ENCODE measurements at regions of chr6 and their contacts with region 1.

Region 1: DNA sequence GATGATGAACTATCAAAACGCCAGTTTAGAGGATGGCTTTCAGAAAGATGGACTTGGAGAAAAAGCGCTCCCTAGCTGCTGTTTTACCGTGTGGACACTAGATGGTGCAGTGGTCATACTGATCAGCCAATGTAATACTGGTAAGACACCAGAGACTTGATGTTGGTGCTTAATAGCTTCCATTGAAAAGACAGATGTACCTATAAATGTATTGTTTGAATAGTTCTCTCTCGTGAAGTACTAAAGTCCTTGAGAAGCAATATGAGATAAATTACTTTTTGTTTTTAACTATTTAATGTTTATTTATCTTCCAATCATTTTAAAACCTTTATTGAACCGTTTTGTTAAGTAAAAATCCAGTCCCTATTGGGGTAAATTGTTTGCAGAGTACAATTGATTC is 63.9 kb upstream of the FUCA2 start:
- DNase-seq: no peak
- ATAC-seq: peak; percentile 99
- H3K4me3 Mint-ChIP-seq: no peak overlapping the region
- H3K27ac Mint-ChIP-seq: no peak overlapping the region
- H3K4me1 Mint-ChIP-seq: no peaks in the 10 kb centered on the region
- H3K27me3 Mint-ChIP-seq: no peaks in the 10 kb centered on the region
- CTCF ChIP-seq: peak; percentile 26

Region 2: DNA sequence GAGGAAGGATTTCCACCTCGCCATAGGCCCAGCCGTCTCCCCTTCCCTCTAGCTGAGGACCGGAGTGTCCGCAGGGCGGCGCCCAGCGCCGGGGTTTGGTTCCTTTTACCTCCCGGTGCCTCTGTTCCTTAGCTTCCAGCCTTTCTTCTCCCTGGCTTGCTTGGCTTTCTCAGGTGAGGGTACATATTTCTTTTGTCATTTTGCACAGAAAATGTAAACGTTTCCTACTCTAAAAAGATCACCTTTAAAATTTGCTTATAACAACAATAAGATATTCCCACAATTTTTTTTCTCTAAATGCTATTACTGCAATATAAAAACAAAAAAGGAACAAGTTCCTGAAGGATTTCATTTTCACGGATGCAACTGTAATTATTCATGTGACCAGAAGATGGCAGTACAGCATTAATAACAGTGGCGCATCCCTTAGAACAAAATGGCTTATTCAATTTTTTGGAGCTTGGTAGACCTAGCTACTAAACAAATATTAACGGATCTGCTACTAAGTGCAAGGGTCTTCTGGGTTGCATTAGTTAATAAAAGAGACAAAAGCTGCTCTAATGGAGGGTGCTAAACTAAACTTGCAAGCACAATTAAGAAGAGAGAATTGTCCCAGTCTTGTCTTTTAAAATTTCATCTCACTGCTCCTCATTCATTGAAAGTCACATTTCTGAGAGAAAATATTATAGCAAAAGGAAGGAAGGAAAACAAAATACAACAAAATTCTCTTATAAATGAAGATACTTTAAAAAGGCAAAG is 1100.7 kb before region 1 on chr6:
- CTCF ChIA-PET with region 1: interaction called, 4 read pairs
- POLR2A ChIA-PET with region 1: no interaction called
- intact Hi-C with region 1: loop called (anchors 1 kb)
- DNase-seq: no peak
- ATAC-seq: peak; percentile 54
- H3K4me3 Mint-ChIP-seq: no peak overlapping the region
- H3K27ac Mint-ChIP-seq: no peak overlapping the region
- H3K4me1 Mint-ChIP-seq: no peaks in the 10 kb centered on the region
- H3K27me3 Mint-ChIP-seq: peaks cover 3% of the 10 kb centered on the region
- CTCF ChIP-seq: peak; percentile 81

Region 3: DNA sequence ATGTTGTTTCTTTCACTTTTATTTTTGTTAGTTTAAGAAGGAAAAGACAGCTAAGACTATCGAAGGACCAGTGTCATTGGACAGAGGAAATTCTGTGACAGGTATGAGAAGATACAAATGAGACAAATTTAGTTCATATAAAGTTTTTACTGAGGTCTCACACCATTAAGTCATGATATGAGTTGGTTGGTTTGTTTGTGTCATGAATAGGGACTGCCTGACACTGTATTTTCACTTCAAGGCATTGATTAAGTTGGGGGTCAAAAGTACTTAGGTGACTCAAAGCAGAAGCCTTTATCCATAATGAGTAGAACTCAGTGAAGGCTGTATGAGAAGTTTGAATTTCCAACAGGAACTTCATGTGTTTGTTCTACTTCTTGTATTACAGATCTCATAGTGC is 609.1 kb before region 1 on chr6:
- CTCF ChIA-PET with region 1: no interaction called
- POLR2A ChIA-PET with region 1: no interaction called
- intact Hi-C with region 1: no loop called
- DNase-seq: no peak
- ATAC-seq: no peak
- H3K4me3 Mint-ChIP-seq: no peak overlapping the region
- H3K27ac Mint-ChIP-seq: no peak overlapping the region
- H3K4me1 Mint-ChIP-seq: no peaks in the 10 kb centered on the region
- H3K27me3 Mint-ChIP-seq: no peaks in the 10 kb centered on the region
- CTCF ChIP-seq: no peak

Region 4: DNA sequence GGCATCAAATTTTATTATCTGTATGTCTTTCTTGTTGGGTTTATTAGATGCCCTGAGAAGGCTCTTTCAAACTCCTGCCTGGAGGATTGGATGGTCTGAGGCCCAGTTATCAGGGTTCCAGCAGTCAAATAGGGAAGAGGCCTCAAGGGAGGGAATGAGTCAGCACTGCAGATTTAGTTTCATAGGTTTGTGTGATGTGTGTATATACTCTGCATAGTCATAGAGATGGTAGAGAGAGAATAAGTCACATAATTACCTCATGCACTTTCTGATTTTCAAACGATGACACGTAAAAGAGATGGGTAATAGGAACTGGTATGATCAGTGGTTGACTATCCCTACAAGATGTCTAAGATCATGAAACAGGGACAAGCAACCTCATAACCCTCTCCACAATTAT is 207.0 kb before region 1 on chr6:
- CTCF ChIA-PET with region 1: no interaction called
- POLR2A ChIA-PET with region 1: no interaction called
- intact Hi-C with region 1: no loop called
- DNase-seq: no peak
- ATAC-seq: no peak
- H3K4me3 Mint-ChIP-seq: no peak overlapping the region
- H3K27ac Mint-ChIP-seq: no peak overlapping the region
- H3K4me1 Mint-ChIP-seq: no peaks in the 10 kb centered on the region
- H3K27me3 Mint-ChIP-seq: no peaks in the 10 kb centered on the region
- CTCF ChIP-seq: no peak

Region 5: GRCh38 chr6:144013486-144013909 is 438.1 kb after region 1 on chr6:
- CTCF ChIA-PET with region 1: interaction called, 100 read pairs
- POLR2A ChIA-PET with region 1: no interaction called
- intact Hi-C with region 1: loop called (anchors 1 kb)
- DNase-seq: peak; percentile 28
- ATAC-seq: peak; percentile 31
- H3K4me3 Mint-ChIP-seq: no peak overlapping the region
- H3K27ac Mint-ChIP-seq: no peak overlapping the region
- H3K4me1 Mint-ChIP-seq: peaks cover 2% of the 10 kb centered on the region
- H3K27me3 Mint-ChIP-seq: no peaks in the 10 kb centered on the region
- CTCF ChIP-seq: peak; percentile 90

Region 6: GRCh38 chr6:144931172-144932035 is 1356.0 kb after region 1 on chr6:
- CTCF ChIA-PET with region 1: no interaction called
- POLR2A ChIA-PET with region 1: no interaction called
- intact Hi-C with region 1: loop called (anchors 5 kb)
- DNase-seq: no peak
- ATAC-seq: no peak
- H3K4me3 Mint-ChIP-seq: no peak overlapping the region
- H3K27ac Mint-ChIP-seq: no peak overlapping the region
- H3K4me1 Mint-ChIP-seq: no peaks in the 10 kb centered on the region
- H3K27me3 Mint-ChIP-seq: peaks cover 5% of the 10 kb centered on the region
- CTCF ChIP-seq: no peak

Region 7: DNA sequence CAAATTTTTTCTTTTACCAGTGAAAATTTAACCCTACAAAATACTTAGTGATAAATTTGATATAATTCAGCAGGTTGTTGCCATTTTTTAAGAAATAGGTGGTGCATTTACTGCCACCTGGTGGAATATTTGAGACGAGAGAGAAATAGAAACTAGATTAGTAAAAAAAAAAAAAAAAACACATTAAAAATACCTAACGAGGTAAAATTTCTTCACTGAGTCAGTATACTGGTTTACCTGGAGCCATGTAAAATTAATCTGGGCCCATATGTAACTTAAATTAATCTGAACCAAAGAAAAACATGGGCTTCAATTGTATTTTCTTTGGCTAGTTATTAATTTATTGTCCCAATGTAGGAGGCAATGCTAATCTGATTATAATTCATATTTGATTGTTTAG is 1639.1 kb after region 1 on chr6:
- CTCF ChIA-PET with region 1: interaction called, 3 read pairs
- POLR2A ChIA-PET with region 1: no interaction called
- intact Hi-C with region 1: loop called (anchors 1 kb)
- DNase-seq: no peak
- ATAC-seq: no peak
- H3K4me3 Mint-ChIP-seq: no peak overlapping the region
- H3K27ac Mint-ChIP-seq: no peak overlapping the region
- H3K4me1 Mint-ChIP-seq: peaks cover 15% of the 10 kb centered on the region
- H3K27me3 Mint-ChIP-seq: no peaks in the 10 kb centered on the region
- CTCF ChIP-seq: no peak